Posterior vena cava (tissue), 2 donors: ENCODE measurements at regions of chr9 and their contacts with region 1.

Region 1: DNA sequence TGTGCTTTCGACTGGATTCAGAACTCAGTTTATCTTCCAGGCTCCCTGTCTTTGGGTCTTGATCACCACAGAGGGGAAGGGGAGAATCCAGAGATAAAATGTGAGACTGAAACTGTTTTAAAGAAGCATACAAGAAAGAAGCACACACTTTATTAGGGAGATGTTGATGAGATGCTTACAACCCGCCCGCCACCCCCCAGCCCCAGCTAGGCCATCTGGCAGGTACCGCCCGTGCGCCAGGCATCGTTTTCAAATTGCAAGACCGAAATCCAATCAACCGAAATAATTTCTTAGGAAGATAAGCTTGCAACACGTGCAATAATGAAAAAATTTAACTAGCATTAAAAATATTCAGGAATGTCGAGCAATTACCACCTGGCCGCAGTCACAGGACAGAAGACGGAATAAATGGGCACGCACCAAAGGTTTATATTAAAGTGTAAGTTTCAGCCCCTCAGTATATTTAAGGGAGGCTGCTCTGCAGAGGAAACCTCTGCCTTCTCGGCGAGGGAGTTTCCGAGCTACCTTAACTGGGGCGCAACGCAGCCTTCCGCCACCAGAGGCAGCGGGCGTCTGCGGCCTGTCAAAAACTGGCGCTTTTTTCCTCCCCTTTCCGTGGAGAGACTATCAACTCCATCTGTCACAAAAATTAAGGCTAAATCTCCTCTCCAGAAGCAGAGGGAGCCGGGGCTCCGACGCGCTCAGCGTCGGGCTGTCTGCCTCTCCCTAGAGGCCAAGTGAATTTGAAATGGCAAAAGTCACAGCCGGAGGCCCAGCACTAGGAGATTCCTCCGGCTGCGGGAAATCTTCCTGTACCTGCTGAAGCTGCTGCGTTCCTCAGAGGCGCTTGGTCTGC is 996 bp upstream of the GAS1 start:
- DNase-seq: peak; percentile 94

Region 2: GRCh38 chr9:86413966-86414880 is 534.1 kb before region 1 on chr9:
- intact Hi-C with region 1: loop called in 1 of 2 experiments (anchors 10 kb)
- DNase-seq: no peak

Region 3: GRCh38 chr9:86494644-86495111 is 453.6 kb before region 1 on chr9:
- intact Hi-C with region 1: loop called (anchors 5 to 10 kb)
- DNase-seq: no peak

Region 4: DNA sequence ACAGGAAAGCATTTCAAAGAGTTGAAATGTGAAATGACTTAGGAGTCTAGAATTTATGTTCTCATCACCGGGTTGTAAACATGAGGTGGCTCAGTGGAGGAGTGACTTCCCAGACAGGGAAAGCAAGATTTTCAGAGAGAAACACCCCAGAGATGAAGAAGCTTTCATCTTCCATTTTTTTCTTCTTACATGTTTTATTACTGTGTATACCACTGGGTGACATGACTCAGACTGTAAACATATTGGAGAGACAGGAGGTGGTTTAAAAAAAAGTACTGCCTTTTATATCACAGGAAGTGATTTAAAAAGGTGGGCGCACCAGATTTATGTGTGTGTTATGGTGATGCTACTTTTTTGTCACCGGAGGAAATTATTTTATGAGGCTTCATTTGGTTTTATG is 385.0 kb before region 1 on chr9:
- intact Hi-C with region 1: no loop called
- DNase-seq: no peak

Region 5: GRCh38 chr9:87119328-87119881 is 171.1 kb after region 1 on chr9:
- intact Hi-C with region 1: loop called in 1 of 2 experiments (anchors 5 kb)
- DNase-seq: no peak

Region 6: GRCh38 chr9:87324613-87325194 is 376.4 kb after region 1 on chr9:
- intact Hi-C with region 1: loop called in 1 of 2 experiments (anchors 5 kb)
- DNase-seq: no peak